ENCODE measurements at regions of chr5 and their contacts with region 1.

Region 1: GRCh38 chr5:108260117-108260857 is 121.6 kb downstream of the FBXL17 start:
- DNase-seq: peak; percentile 89
- H3K4me3 ChIP-seq: peak overlapping the region in 2 of 3 experiments; percentile 4 to 51
- H3K27ac ChIP-seq: peak overlapping the region; percentile 7
- H3K4me1 ChIP-seq: peaks cover 8% of the 10 kb centered on the region
- H3K27me3 ChIP-seq: no peaks in the 10 kb centered on the region
- CTCF ChIP-seq: peak; percentile 93 to 96
- POLR2A ChIP-seq: no peak

Region 2: DNA sequence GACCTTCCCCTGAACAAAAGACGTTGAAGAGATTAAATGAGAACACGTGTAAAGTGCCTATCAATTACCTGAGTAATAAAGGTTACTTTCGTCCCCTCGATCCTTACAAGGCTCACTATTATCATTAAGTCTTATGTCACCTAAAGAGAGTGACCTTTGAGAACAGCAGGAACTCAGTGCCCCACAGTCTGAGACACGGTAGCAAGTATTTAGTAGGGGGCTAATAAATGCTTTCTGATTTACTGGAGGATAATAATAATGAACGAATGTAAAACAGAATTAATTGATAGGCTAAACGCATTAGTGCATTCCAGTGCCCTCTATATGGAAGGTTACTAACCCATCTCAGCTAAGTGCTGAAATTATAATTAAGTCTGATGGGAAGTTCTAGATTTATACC is 78.3 kb before region 1 on chr5:
- CTCF ChIA-PET with region 1: no interaction called
- POLR2A ChIA-PET with region 1: no interaction called
- dilution Hi-C with region 1: no loop called
- intact Hi-C with region 1: no loop called
- DNase-seq: no peak
- H3K4me3 ChIP-seq: no peak overlapping the region
- H3K27ac ChIP-seq: no peak overlapping the region
- H3K4me1 ChIP-seq: no peaks in the 10 kb centered on the region
- H3K27me3 ChIP-seq: no peaks in the 10 kb centered on the region
- CTCF ChIP-seq: no peak
- POLR2A ChIP-seq: no peak

Region 3: GRCh38 chr5:108276187-108277050 is 16.1 kb after region 1 on chr5:
- CTCF ChIA-PET with region 1: interaction called, 21 read pairs
- POLR2A ChIA-PET with region 1: no interaction called
- dilution Hi-C with region 1: no loop called
- intact Hi-C with region 1: no loop called
- DNase-seq: no peak
- H3K4me3 ChIP-seq: no peak overlapping the region
- H3K27ac ChIP-seq: no peak overlapping the region
- H3K4me1 ChIP-seq: no peaks in the 10 kb centered on the region
- H3K27me3 ChIP-seq: no peaks in the 10 kb centered on the region
- CTCF ChIP-seq: no peak
- POLR2A ChIP-seq: no peak

Region 4: GRCh38 chr5:108345541-108346171 is 85.4 kb after region 1 on chr5:
- CTCF ChIA-PET with region 1: interaction called, 317 read pairs
- POLR2A ChIA-PET with region 1: no interaction called
- dilution Hi-C with region 1: no loop called
- intact Hi-C with region 1: loop called (anchors 1 kb)
- DNase-seq: peak; percentile 70
- H3K4me3 ChIP-seq: no peak overlapping the region
- H3K27ac ChIP-seq: no peak overlapping the region
- H3K4me1 ChIP-seq: no peaks in the 10 kb centered on the region
- H3K27me3 ChIP-seq: no peaks in the 10 kb centered on the region
- CTCF ChIP-seq: peak; percentile 2 to 10
- POLR2A ChIP-seq: no peak

Region 5: DNA sequence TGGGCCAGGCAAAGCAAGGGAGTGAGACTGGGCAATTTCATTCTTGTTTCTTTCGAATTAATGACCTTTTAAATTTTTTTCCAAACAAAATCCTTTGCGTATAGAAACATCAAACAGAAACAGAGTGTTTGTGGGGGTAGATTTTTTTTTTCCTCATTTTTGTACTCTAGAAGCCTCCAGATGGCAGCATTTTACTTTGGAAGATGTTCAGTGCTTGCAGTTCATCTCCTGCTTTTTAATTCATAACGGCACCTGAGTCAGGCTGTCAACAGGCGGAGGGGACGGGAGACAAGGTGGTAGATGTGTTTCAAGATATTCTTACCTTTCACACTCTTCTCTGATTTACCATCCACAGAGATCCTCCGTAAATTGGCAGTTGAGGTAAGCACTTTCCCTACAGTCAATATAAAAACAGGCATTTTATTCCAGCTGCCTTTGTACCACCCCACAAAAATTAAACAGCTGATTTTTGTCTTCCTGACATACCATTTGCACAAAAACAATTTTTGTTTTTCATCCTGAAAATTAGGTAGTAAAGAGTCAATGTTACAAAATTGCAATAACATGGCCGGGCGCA is 221.2 kb after region 1 on chr5:
- CTCF ChIA-PET with region 1: no interaction called
- POLR2A ChIA-PET with region 1: no interaction called
- dilution Hi-C with region 1: no loop called
- intact Hi-C with region 1: loop called (anchors 1 kb)
- DNase-seq: peak; percentile 26
- H3K4me3 ChIP-seq: no peak overlapping the region
- H3K27ac ChIP-seq: no peak overlapping the region
- H3K4me1 ChIP-seq: no peaks in the 10 kb centered on the region
- H3K27me3 ChIP-seq: no peaks in the 10 kb centered on the region
- CTCF ChIP-seq: peak in 1 of 2 donors; percentile 16
- POLR2A ChIP-seq: no peak